ENCODE measurements at regions of chr13 and their contacts with region 1.

Region 1: GRCh38 chr13:92355213-92355612 is 871.4 kb upstream of the GPC6 start:
- DNase-seq: no peak
- ATAC-seq: no peak

Region 2: GRCh38 chr13:91868351-91868750 is 486.9 kb before region 1 on chr13:
- intact Hi-C with region 1: no loop called
- DNase-seq: no peak
- ATAC-seq: no peak

Region 3: GRCh38 chr13:92187378-92187989 is 167.7 kb before region 1 on chr13:
- intact Hi-C with region 1: loop called (anchors 5 kb)
- DNase-seq: no peak
- ATAC-seq: no peak